ENCODE measurements at regions of chr19 and their contacts with region 1.

Region 1: DNA sequence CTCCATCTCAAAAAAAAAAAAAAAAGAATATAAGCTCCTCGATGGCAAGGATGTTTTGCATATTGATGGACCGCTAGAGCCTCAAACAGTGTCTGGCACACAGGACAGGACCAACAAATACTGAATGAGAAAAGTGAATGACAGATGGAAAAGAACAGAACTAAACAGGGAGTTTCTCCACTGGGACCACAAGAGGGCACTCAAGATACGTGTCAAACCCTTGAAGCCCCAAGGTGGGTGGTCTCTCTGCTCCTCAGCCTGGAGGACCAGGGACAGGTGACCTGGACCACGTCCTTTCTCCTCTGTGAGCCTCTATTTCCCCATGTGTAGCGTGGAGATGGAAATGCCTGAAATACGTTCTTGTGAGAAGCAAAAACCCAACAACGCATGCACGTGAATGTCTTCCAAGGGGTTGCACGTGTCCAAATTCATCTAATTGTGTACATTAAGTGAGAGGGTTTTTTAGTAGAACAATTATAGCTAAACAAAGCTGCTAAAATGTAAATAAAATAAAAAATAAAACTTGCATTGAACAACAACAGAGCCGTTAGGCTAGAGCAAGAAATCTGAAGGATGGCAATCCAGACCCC is 5.7 kb upstream of the CDC42EP5 start:
- DNase-seq: peak; percentile 31

Region 2: DNA sequence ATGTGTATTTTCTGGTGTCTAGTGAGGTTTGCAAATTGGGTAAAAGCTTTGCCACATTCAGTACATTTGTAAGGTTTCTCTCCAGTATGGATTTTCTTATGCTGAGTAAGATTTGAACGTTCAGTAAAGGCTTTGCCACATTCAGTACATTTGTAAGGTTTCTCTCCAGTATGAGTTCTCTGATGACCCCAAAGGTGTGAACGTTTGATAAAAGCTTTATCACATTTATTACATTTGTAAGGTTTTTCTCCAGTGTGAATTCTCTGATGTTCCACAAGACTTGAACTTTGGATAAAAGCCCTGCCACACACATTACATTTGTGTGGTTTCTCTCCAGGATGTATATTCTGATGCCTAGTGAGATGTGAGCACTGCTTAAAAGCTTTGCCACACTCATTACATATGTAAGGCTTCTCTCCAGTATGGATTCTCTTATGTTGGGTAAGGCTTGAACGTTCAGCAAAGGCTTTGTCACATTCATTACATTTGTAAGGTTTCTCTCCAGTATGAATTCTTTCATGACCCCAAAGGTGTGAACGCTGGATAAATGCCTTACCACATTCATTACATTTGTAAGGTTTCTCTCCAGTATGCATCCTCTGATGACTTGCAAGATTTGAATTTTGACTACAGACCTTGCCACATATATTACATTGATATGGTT is 1241.5 kb before region 1 on chr19:
- intact Hi-C with region 1: loop called in 1 of 2 experiments (anchors 5 kb)
- DNase-seq: no peak